ENCODE measurements at regions of chr11 and their contacts with region 1.

Region 1: GRCh38 chr11:45846974-45847910 is at the start of gene CRY2:
- DNase-seq: peak; percentile 98 to 100 (median 99)
- H3K4me3 ChIP-seq: peak within 1 kb of the TSS; percentile 53 to 100 (median 94)
- H3K27ac ChIP-seq: peak within 1 kb of the TSS; percentile 44 to 98 (median 91)
- H3K27me3 ChIP-seq: no peaks in the 10 kb centered on the region
- CTCF ChIP-seq: peak in 21 of 56 donors; percentile 4 to 51 (median 20)
- total RNA-seq, gene CRY2: 65.9 to 159 (median 95.3) TPM

Region 2: GRCh38 chr11:45665206-45665932 is 181.9 kb before region 1 on chr11 and contains the start of gene CHST1:
- intact Hi-C with region 1: loop called in 1 of 2 experiments (anchors 5 kb)
- DNase-seq: peak in 7 of 10 donors; percentile 24 to 79 (median 59)
- H3K4me3 ChIP-seq: peak within 1 kb of the TSS; percentile 49 to 90 (median 78)
- H3K27ac ChIP-seq: peak within 1 kb of the TSS in 57 of 59 donors; percentile 48 to 93 (median 84)
- H3K27me3 ChIP-seq: peaks cover 0 to 5% (median 0%) of the 10 kb centered on the region in 45 donors
- CTCF ChIP-seq: peak in 3 of 56 donors; percentile 9 to 40 (median 12)
- total RNA-seq, gene CHST1: 51.7 to 159 (median 100) TPM

Region 3: GRCh38 chr11:45804761-45805304 is 42.4 kb before region 1 on chr11 and contains the start of gene SLC35C1:
- intact Hi-C with region 1: loop called (anchors 1 to 2 kb)
- DNase-seq: peak; percentile 95 to 99 (median 98)
- H3K4me3 ChIP-seq: peak within 1 kb of the TSS; percentile 58 to 99 (median 89)
- H3K27ac ChIP-seq: peak within 1 kb of the TSS in 57 of 59 donors; percentile 4 to 91 (median 78)
- H3K27me3 ChIP-seq: no peaks in the 10 kb centered on the region
- CTCF ChIP-seq: peak in 51 of 56 donors; percentile 24 to 71 (median 49)
- total RNA-seq, gene SLC35C1: 5.6 to 14.4 (median 8.5) TPM

Region 4: GRCh38 chr11:45899448-45900173 is 52.4 kb after region 1 on chr11:
- intact Hi-C with region 1: loop called (anchors 5 kb)
- DNase-seq: peak; percentile 83 to 97 (median 94)
- H3K4me3 ChIP-seq: peak overlapping the region; percentile 34 to 93 (median 79)
- H3K27ac ChIP-seq: peak overlapping the region; percentile 41 to 100 (median 97)
- H3K27me3 ChIP-seq: no peaks in the 10 kb centered on the region
- CTCF ChIP-seq: peak in 15 of 56 donors; percentile 4 to 34 (median 13)

Region 5: GRCh38 chr11:45917623-45918330 is 70.5 kb after region 1 on chr11 and contains the start of gene PEX16:
- intact Hi-C with region 1: loop called (anchors 2 to 5 kb)
- DNase-seq: peak; percentile 93 to 97 (median 96)
- H3K4me3 ChIP-seq: peak within 1 kb of the TSS; percentile 55 to 100 (median 96)
- H3K27ac ChIP-seq: peak within 1 kb of the TSS; percentile 31 to 97 (median 92)
- H3K27me3 ChIP-seq: peaks cover 0 to 17% (median 10%) of the 10 kb centered on the region in 45 donors
- CTCF ChIP-seq: peak in 17 of 56 donors; percentile 6 to 58 (median 27)
- total RNA-seq, gene PEX16: 26.7 to 59.7 (median 43.8) TPM

Region 6: DNA sequence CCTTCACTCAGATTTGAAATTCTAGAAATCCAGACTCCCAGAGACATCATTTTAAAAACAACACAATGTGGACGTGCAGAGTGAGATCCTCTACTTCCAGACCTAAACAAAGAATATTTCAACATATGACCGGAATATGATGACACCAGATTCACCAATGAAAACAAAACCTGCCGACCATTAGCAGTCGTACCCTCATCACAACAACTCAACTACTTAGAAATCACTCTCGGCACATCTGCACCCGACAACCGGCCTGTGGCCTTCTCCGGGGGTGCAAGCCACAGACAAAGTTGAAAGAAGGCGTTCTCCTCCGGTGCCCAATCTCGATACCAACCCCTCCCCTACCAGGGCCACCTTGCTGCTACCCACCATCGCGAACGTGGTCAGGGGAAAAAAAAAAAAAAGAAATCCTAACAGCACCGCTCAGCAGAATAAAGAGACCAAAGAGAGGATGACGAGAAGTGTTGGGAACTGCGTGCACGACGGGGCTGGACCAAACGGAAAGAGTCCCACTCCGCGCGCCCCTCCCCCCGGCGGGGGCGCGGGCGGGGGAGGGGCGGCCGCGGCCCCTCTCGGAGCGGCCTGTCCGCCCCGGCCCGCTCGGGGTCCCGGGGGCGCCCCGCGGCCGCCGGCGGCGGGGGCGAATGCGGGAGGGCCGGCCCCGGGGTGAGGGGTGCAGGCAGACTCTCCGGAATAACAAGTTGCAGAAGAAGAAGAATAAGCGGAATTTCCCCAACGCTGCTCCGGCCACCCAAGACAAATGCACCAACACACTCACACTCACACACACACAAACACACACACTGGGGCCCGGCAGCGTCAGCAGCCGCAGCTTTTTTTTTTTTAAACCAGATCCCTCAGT is 272.3 kb after region 1 on chr11:
- intact Hi-C with region 1: no loop called
- DNase-seq: peak in 3 of 10 donors; percentile 20 to 46 (median 39)
- H3K4me3 ChIP-seq: peak overlapping the region; percentile 53 to 87 (median 74)
- H3K27ac ChIP-seq: peak overlapping the region; percentile 77 to 99 (median 96)
- H3K27me3 ChIP-seq: no peaks in the 10 kb centered on the region
- CTCF ChIP-seq: peak in 1 of 56 donors; percentile 8

Measured in dorsolateral prefrontal cortex (tissue), 120 donors.